Activated naive CD4-positive, alpha-beta T cell treated with anti-CD3 and anti-CD28 coated beads for 36 hours (primary cell): ENCODE measurements at regions of chr3 and their contacts with region 1.

Region 1: GRCh38 chr3:143847787-143848631 is at the start of gene SLC9A9:
- DNase-seq: peak; percentile 61
- H3K4me3 Mint-ChIP-seq: peak within 1 kb of the TSS; percentile 87
- H3K27ac Mint-ChIP-seq: peak within 1 kb of the TSS; percentile 80
- H3K4me1 Mint-ChIP-seq: peaks cover 49% of the 10 kb centered on the region
- H3K27me3 Mint-ChIP-seq: no peaks in the 10 kb centered on the region
- total RNA-seq, gene SLC9A9: 0.33 to 0.49 TPM

Region 2: GRCh38 chr3:143060906-143061305 is 787.1 kb before region 1 on chr3:
- CTCF ChIA-PET with region 1: no interaction called
- intact Hi-C with region 1: loop called (anchors 2 kb)
- DNase-seq: no peak
- H3K4me3 Mint-ChIP-seq: no peak overlapping the region
- H3K27ac Mint-ChIP-seq: no peak overlapping the region
- H3K4me1 Mint-ChIP-seq: peaks cover 27% of the 10 kb centered on the region
- H3K27me3 Mint-ChIP-seq: no peaks in the 10 kb centered on the region

Region 3: DNA sequence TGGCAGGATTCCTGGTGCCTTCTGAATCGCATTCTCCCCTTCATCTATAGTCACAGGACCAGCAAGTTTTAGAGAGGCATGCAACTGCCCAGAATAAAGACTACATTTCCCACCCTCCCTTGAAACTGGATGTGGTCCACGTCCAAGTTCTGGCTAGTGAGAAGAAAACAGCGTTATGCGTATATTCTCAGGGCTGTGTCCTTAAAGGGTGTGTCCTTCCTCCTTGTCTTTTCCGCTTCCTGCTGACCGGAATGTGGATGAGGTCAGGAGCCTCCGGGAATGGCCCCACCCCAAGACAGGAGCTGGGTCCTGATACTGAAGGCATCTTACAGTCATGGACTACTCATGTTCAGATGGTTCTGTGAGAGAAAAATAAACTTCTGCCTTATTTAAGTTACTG is 708.2 kb before region 1 on chr3:
- CTCF ChIA-PET with region 1: no interaction called
- intact Hi-C with region 1: no loop called
- DNase-seq: no peak
- H3K4me3 Mint-ChIP-seq: no peak overlapping the region
- H3K27ac Mint-ChIP-seq: no peak overlapping the region
- H3K4me1 Mint-ChIP-seq: peaks cover 5% of the 10 kb centered on the region
- H3K27me3 Mint-ChIP-seq: no peaks in the 10 kb centered on the region

Region 4: DNA sequence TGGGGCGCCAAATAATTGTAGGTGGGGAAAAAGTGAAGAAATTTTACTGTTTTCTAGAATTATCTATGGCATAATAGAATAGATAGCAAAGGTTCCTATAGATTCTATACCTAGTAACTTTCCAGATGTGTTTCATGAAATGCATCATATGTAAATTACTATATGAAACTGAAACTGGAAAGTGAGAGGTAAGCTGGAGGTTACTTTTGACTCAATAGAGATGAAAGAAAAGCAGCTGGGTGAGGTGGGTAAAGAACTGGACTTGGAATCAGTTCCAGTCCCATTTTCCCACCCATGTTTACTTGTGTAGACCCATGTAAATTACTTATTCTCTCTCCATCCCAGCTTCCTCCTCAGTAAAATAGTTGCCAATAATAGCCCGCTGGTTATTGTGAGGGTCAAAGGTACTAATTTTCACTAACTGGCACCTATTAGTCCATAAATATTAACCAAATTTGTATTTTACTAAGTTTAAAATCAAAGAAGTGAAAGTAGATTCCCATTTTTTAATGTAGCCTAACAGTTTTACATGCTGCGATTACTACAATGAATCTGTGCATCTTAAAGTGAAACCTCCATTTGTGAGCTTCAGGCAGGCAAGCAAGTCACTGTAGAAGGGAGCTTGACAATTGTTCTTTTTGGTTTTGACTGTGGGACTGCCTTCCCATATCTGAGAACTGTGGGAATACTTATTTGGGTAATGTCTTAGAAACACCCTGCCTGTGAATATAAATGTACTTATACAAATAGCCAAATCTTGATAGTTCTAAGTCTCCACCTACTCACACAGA is 311.8 kb before region 1 on chr3:
- CTCF ChIA-PET with region 1: no interaction called
- intact Hi-C with region 1: loop called (anchors 5 kb)
- DNase-seq: no peak
- H3K4me3 Mint-ChIP-seq: no peak overlapping the region
- H3K27ac Mint-ChIP-seq: no peak overlapping the region
- H3K4me1 Mint-ChIP-seq: peaks cover 21% of the 10 kb centered on the region
- H3K27me3 Mint-ChIP-seq: no peaks in the 10 kb centered on the region

Region 5: GRCh38 chr3:143814443-143814889 is 33.5 kb before region 1 on chr3:
- CTCF ChIA-PET with region 1: no interaction called
- intact Hi-C with region 1: loop called (anchors 1 kb)
- DNase-seq: peak; percentile 23
- H3K4me3 Mint-ChIP-seq: no peak overlapping the region
- H3K27ac Mint-ChIP-seq: peak overlapping the region; percentile 4
- H3K4me1 Mint-ChIP-seq: peaks cover 16% of the 10 kb centered on the region
- H3K27me3 Mint-ChIP-seq: no peaks in the 10 kb centered on the region

Region 6: GRCh38 chr3:143831208-143831607 is 16.8 kb before region 1 on chr3:
- CTCF ChIA-PET with region 1: no interaction called
- intact Hi-C with region 1: loop called (anchors 1 kb)
- DNase-seq: peak; percentile 17
- H3K4me3 Mint-ChIP-seq: no peak overlapping the region
- H3K27ac Mint-ChIP-seq: no peak overlapping the region
- H3K4me1 Mint-ChIP-seq: peaks cover 37% of the 10 kb centered on the region
- H3K27me3 Mint-ChIP-seq: no peaks in the 10 kb centered on the region